H1 (cell line): ENCODE measurements at regions of chr14 and their contacts with region 1.

Region 1: DNA sequence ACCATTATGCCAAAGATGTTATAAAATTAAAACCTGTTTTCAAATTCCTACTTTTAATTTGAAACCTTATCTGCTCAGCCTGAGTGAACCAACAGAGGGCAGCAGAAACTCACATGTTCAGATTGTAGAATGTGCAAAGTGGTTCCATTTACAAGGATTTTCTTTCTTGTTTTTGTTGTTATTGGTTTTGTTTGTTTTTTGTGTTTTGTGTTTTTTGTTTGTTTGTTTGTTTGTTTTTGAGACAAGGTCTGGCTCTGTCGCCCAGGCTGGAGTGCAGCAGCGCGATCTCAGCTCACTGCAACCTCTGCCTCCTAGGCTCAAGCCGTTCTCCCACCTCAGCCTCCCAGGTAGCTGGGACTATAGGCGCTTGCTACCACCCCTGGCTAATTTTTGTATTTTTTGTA is 22.8 kb upstream of the GARIN2 start:
- DNase-seq: no peak
- H3K4me3 ChIP-seq: no peak overlapping the region
- H3K27ac ChIP-seq: no peak overlapping the region
- H3K4me1 ChIP-seq: no peaks in the 10 kb centered on the region
- H3K27me3 ChIP-seq: no peaks in the 10 kb centered on the region
- CTCF ChIP-seq: peak in 2 of 3 experiments; percentile 68 to 80; a peak in 2 of 4 replicates
- EP300 ChIP-seq: no peak
- POLR2A ChIP-seq: no peak
- RAD21 ChIP-seq: peak; percentile 86 to 90

Region 2: DNA sequence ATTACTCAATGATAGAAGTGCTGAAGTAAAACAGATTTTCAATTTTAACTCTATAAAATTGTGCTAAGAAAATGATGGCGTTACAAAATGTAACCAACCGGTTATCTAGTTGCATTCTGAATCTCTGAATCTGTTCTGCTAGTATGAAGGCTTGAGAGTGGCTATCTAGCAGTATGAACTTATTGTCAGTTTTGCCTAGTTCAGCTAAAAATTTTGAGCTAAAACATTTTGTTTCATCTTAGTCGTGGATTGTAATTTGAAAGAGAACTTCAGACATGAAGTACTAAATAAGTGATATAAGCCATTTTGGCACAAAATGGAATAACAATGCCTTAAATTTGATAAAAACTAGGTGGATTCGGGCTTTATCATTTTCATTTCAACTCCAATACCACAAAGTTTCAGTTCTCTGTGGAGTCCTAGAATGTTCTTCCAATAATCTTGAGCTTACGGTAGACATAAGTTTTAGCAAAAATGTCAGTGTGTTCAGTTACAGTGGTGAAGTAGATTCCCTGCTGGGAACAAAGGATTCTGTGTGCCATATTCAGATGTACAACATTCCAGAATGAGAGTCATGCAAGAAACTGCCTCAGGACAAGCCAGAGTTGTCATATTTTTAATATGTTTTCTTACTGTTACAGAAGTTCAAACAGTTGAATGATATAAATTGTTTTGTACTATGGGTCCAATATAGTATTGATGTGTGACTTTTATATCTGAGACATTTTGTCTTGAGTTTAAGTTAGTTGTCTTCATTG is 165.1 kb after region 1 on chr14:
- CTCF ChIA-PET with region 1: interaction called, 10 read pairs
- POLR2A ChIA-PET with region 1: no interaction called
- DNase-seq: no peak
- H3K4me3 ChIP-seq: no peak overlapping the region
- H3K27ac ChIP-seq: no peak overlapping the region
- H3K4me1 ChIP-seq: no peaks in the 10 kb centered on the region
- H3K27me3 ChIP-seq: no peaks in the 10 kb centered on the region
- CTCF ChIP-seq: no peak
- EP300 ChIP-seq: no peak
- POLR2A ChIP-seq: no peak
- RAD21 ChIP-seq: no peak

Region 3: DNA sequence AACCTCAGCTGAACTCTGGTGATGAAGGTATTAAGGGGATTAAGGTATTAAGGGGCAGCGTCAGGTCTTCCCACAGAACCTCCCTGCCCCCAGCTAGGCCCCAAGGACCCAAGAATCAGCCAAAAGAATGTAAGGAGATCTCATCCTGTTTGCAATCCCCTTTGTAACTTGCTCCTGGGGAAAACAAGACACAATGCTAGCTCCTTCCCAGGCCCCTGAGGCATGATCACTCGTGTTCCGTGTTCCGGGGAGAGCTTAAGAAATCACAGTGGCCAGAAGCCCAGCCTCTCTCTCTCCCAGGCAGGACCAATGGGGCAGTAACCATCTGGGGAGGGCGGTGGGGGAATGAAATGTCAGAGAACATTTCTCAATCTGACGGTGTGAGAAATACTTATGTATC is 400.5 kb after region 1 on chr14:
- CTCF ChIA-PET with region 1: no interaction called
- POLR2A ChIA-PET with region 1: no interaction called
- DNase-seq: no peak
- H3K4me3 ChIP-seq: no peak overlapping the region
- H3K27ac ChIP-seq: no peak overlapping the region
- H3K4me1 ChIP-seq: no peaks in the 10 kb centered on the region
- H3K27me3 ChIP-seq: peaks cover 0 to 2% (median 0%) of the 10 kb centered on the region in 4 experiments; a peak in 1 of 7 replicates
- CTCF ChIP-seq: no peak
- EP300 ChIP-seq: no peak
- POLR2A ChIP-seq: no peak
- RAD21 ChIP-seq: no peak